K562 (cell line): ENCODE measurements at regions of chr1 and their contacts with region 1.

Region 1: DNA sequence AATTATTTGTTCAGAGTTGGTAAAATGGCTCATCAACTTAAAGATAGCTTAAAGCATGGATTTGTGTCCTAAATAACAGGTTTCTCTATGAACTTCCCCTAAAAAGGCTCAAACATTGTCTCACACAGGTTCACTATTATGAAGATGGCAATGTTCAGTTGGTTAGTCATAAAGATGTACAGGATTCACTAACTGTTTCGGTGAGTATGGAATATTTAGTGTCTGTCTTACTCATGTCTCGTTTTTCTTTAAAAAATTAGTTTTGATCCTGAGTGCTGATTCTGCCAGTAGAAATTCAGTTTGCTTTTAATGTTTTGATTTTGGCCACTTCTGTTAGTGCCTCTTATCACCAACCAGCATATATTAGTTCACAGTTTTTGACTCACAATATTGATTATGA is 7.5 kb upstream of the MOV10 start:
- DNase-seq: no peak
- ATAC-seq: no peak
- H3K4me3 ChIP-seq: no peak overlapping the region
- H3K27ac ChIP-seq: no peak overlapping the region
- H3K4me1 ChIP-seq: no peaks in the 10 kb centered on the region
- H3K27me3 ChIP-seq: no peaks in the 10 kb centered on the region
- CTCF ChIP-seq: no peak
- EP300 ChIP-seq: no peak
- POLR2A ChIP-seq: no peak
- RAD21 ChIP-seq: no peak

Region 2: DNA sequence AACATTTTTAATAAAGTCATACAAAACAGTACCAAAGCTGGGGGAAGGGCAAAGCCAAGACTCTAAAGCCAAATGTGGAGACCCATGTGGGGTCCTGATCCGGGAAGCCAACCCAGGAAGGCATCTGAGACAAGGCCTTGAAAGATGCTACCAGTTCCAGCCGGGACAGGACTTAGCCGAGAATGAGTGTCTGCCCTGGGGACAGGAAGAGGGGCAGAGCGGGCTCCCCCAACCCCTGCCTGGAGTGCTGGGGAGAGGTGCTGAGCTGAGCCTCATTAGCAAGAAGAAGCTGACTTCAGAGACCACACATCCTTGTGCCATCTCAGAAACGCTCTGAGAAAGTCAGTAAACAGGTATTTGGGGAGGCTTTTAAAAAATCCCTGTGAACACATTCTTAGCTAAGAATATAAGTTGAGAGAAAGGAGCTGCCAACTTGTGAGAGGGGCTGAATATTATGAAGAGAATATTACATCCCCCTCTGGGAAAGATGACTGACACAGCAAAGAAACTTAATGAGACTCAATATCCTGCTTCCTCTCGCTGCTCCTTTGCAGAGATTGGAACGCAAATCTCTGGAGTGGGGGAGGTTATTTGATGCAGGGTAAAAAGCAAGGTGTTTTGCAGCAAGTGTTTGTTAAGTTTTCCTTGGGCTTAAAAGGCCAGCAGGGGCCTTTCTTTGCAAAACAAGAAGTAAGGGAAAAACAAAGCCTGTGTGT is 574.1 kb before region 1 on chr1:
- CTCF ChIA-PET with region 1: no interaction called
- POLR2A ChIA-PET with region 1: no interaction called
- in situ Hi-C with region 1: no loop called
- intact Hi-C with region 1: no loop called
- DNase-seq: no peak
- ATAC-seq: no peak
- H3K4me3 ChIP-seq: no peak overlapping the region
- H3K27ac ChIP-seq: no peak overlapping the region
- H3K4me1 ChIP-seq: no peaks in the 10 kb centered on the region
- H3K27me3 ChIP-seq: no peaks in the 10 kb centered on the region
- CTCF ChIP-seq: no peak
- EP300 ChIP-seq: no peak
- POLR2A ChIP-seq: no peak
- RAD21 ChIP-seq: no peak

Region 3: GRCh38 chr1:112651205-112651604 is 15.7 kb before region 1 on chr1:
- CTCF ChIA-PET with region 1: no interaction called
- POLR2A ChIA-PET with region 1: interaction called, 48 read pairs
- in situ Hi-C with region 1: no loop called
- intact Hi-C with region 1: no loop called
- DNase-seq: no peak
- ATAC-seq: no peak
- H3K4me3 ChIP-seq: no peak overlapping the region
- H3K27ac ChIP-seq: no peak overlapping the region
- H3K4me1 ChIP-seq: no peaks in the 10 kb centered on the region
- H3K27me3 ChIP-seq: no peaks in the 10 kb centered on the region
- CTCF ChIP-seq: no peak
- EP300 ChIP-seq: no peak
- POLR2A ChIP-seq: no peak
- RAD21 ChIP-seq: no peak